CD8-positive, alpha-beta T cell (primary cell): ENCODE measurements at regions of chr9 and their contacts with region 1.

Region 1: DNA sequence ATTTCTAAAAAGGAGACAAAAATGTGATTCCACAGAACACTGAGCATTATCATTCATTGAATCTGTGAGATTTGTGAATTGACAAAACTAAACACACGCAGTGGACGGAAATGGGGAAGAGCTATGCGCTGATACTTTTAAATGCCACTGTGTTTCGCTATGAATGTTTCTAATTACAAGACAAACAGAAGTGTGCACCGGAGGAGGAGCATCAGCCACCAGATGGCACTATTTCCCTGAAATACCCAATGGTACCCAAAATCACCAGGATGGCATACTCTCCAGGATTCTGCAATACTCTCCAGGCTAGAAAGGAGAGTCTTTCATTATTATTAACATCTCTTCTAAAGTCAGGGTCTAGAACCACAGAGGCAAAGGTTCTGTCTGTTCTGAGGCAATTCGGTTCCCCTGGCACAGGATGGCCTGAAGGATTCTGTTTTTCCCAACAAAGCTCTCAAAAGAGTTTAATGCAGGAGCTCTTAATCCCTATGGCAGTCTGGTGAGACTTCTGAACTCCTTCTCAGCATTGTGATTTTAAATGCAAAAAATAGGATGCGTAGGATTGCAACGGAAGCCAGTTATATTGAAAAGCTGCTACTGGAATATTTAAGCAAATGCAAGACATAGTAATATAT is 13.8 kb upstream of the PUM3 start:
- DNase-seq: peak; percentile 28 to 75 (median 60)
- ATAC-seq: peak; percentile 62
- H3K4me3 ChIP-seq: no peak overlapping the region
- H3K4me3 Mint-ChIP-seq: no peak overlapping the region
- H3K27ac ChIP-seq: no peak overlapping the region
- H3K27ac Mint-ChIP-seq: no peak overlapping the region
- H3K4me1 ChIP-seq: no peaks in the 10 kb centered on the region
- H3K4me1 Mint-ChIP-seq: peaks cover 3% of the 10 kb centered on the region
- H3K27me3 ChIP-seq: peaks cover 0 to 3% of the 10 kb centered on the region in 2 experiments
- H3K27me3 Mint-ChIP-seq: peaks cover 40% of the 10 kb centered on the region
- CTCF ChIP-seq: peak; percentile 88

Region 2: DNA sequence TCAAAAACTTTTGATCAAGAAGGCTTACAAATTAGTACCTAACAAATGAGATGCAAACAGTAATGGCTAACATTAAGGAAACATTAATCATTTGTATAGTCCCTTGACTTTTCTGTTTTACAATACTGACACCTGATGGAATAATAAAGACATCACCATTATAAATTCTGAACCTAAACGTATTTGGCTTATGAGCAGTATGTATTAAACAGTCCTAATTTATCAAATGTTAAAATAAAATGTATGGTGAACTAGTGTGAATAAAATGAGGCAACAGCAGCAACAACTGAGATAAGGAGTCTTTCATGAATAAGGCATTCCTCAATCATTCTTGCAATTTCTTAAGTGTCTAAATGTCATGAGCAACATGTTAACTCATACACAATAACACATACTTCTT is 19.8 kb before region 1 on chr9:
- CTCF ChIA-PET with region 1: interaction called, 10 read pairs
- POLR2A ChIA-PET with region 1: no interaction called
- intact Hi-C with region 1: no loop called
- DNase-seq: peak in 1 of 9 experiments; percentile 8
- ATAC-seq: no peak
- H3K4me3 ChIP-seq: no peak overlapping the region
- H3K4me3 Mint-ChIP-seq: no peak overlapping the region
- H3K27ac ChIP-seq: no peak overlapping the region
- H3K27ac Mint-ChIP-seq: peak overlapping the region; percentile 12
- H3K4me1 ChIP-seq: peaks cover 18% of the 10 kb centered on the region
- H3K4me1 Mint-ChIP-seq: peaks cover 23% of the 10 kb centered on the region
- H3K27me3 ChIP-seq: no peaks in the 10 kb centered on the region
- H3K27me3 Mint-ChIP-seq: no peaks in the 10 kb centered on the region
- CTCF ChIP-seq: no peak

Region 3: DNA sequence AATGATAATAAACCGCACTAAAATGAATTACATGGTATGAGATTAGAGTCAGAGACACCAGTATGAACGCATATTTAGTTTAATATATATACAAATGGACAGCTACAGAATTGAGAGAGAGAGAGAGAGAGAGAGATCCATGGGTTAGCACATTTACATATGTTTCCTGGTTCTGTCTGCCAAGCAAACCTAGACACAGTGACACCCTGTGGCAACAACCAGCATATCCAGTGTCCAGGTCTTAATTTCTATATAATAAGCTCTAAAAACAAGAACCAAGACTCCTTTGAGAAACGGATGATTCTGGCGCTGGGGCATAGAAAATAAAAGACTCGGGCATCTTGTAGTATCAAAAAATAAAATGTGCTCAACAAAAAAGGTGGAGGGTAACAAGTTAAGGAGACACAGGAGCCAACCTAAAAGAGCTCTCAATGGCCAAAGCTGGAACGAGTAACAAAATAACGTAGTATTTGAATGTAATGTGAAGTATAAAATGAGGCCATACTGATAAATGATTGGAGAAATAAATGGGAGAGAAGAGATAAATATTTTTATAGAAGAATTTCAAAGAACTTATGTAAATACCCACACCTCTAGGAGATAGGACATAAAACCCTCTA is 583.6 kb after region 1 on chr9:
- CTCF ChIA-PET with region 1: no interaction called
- POLR2A ChIA-PET with region 1: no interaction called
- intact Hi-C with region 1: loop called (anchors 1 to 5 kb)
- DNase-seq: peak in 7 of 9 experiments; percentile 6 to 69 (median 38)
- ATAC-seq: peak; percentile 79
- H3K4me3 ChIP-seq: no peak overlapping the region
- H3K4me3 Mint-ChIP-seq: no peak overlapping the region
- H3K27ac ChIP-seq: no peak overlapping the region
- H3K27ac Mint-ChIP-seq: no peak overlapping the region
- H3K4me1 ChIP-seq: no peaks in the 10 kb centered on the region
- H3K4me1 Mint-ChIP-seq: peaks cover 9% of the 10 kb centered on the region
- H3K27me3 ChIP-seq: no peaks in the 10 kb centered on the region
- H3K27me3 Mint-ChIP-seq: no peaks in the 10 kb centered on the region
- CTCF ChIP-seq: peak; percentile 47

Region 4: GRCh38 chr9:4117835-4118610 is 1260.3 kb after region 1 on chr9:
- CTCF ChIA-PET with region 1: no interaction called
- POLR2A ChIA-PET with region 1: no interaction called
- intact Hi-C with region 1: loop called in 1 of 2 experiments (anchors 5 kb)
- DNase-seq: peak in 6 of 9 experiments; percentile 3 to 62 (median 42)
- ATAC-seq: no peak
- H3K4me3 ChIP-seq: no peak overlapping the region
- H3K4me3 Mint-ChIP-seq: no peak overlapping the region
- H3K27ac ChIP-seq: no peak overlapping the region
- H3K27ac Mint-ChIP-seq: no peak overlapping the region
- H3K4me1 ChIP-seq: no peaks in the 10 kb centered on the region
- H3K4me1 Mint-ChIP-seq: no peaks in the 10 kb centered on the region
- H3K27me3 ChIP-seq: no peaks in the 10 kb centered on the region
- H3K27me3 Mint-ChIP-seq: no peaks in the 10 kb centered on the region
- CTCF ChIP-seq: peak; percentile 25

Region 5: DNA sequence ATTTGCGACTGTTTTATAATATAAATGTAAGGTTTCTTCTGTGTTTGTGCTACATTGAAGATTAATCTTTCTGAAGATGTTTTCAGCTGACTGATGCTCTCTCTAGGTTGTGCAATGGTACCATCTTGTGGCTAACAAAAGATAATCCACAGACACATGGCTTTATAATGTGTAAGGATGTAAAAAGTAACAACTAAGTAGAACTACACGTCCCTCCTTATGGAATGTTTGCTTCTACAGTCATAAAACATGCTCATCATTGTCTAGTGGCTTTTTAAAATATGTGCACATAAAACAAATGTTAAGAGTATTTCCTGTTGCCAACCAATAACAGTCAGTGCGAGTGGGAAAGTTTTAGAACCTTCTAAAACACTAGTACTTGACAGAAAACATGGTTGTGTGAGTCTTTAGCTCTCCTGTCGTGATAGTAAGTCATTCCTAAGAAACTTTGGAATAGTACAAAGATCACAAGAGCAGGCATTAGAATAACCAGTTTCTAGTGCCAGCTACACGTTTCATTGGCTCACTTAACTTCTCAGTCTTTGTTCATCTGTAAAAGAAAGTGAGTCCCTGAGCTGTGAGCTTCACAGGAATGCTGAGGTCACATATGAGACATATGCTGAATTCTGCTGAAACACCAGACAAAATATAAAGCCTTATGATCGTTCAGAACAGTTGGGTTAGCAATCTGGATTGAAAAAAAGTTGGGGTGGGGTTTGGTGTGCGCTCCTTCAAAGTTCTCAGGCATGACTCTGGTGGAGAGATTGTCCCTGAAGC is 1517.9 kb after region 1 on chr9:
- CTCF ChIA-PET with region 1: no interaction called
- POLR2A ChIA-PET with region 1: no interaction called
- intact Hi-C with region 1: loop called (anchors 1 to 2 kb)
- DNase-seq: peak in 2 of 9 experiments; percentile 40 to 55
- ATAC-seq: peak; percentile 54
- H3K4me3 ChIP-seq: no peak overlapping the region
- H3K4me3 Mint-ChIP-seq: no peak overlapping the region
- H3K27ac ChIP-seq: no peak overlapping the region
- H3K27ac Mint-ChIP-seq: no peak overlapping the region
- H3K4me1 ChIP-seq: no peaks in the 10 kb centered on the region
- H3K4me1 Mint-ChIP-seq: no peaks in the 10 kb centered on the region
- H3K27me3 ChIP-seq: peaks cover 0 to 2% of the 10 kb centered on the region in 2 experiments
- H3K27me3 Mint-ChIP-seq: peaks cover 10% of the 10 kb centered on the region
- CTCF ChIP-seq: no peak